ENCODE measurements at regions of chr7 and their contacts with region 1.

Region 1: GRCh38 chr7:156640257-156640948 is at the start of gene RNF32:
- DNase-seq: peak; percentile 90
- H3K4me3 Mint-ChIP-seq: peak within 1 kb of the TSS; percentile 79
- H3K27ac Mint-ChIP-seq: peak within 1 kb of the TSS; percentile 88
- H3K4me1 Mint-ChIP-seq: peaks cover 6% of the 10 kb centered on the region
- H3K27me3 Mint-ChIP-seq: no peaks in the 10 kb centered on the region
- CTCF ChIP-seq: no peak
- total RNA-seq, gene RNF32: 3.0 and 3.6 TPM in 2 replicates

Region 2: GRCh38 chr7:155815332-155816191 is 824.8 kb before region 1 on chr7:
- CTCF ChIA-PET with region 1: interaction called, 3 read pairs
- POLR2A ChIA-PET with region 1: no interaction called
- intact Hi-C with region 1: loop called (anchors 10 kb)
- DNase-seq: peak; percentile 74
- H3K4me3 Mint-ChIP-seq: no peak overlapping the region
- H3K27ac Mint-ChIP-seq: no peak overlapping the region
- H3K4me1 Mint-ChIP-seq: peaks cover 11% of the 10 kb centered on the region
- H3K27me3 Mint-ChIP-seq: peaks cover 30% of the 10 kb centered on the region
- CTCF ChIP-seq: peak; percentile 91

Region 3: GRCh38 chr7:156261595-156261994 is 378.8 kb before region 1 on chr7:
- CTCF ChIA-PET with region 1: no interaction called
- POLR2A ChIA-PET with region 1: no interaction called
- intact Hi-C with region 1: no loop called
- DNase-seq: no peak
- H3K4me3 Mint-ChIP-seq: no peak overlapping the region
- H3K27ac Mint-ChIP-seq: no peak overlapping the region
- H3K4me1 Mint-ChIP-seq: no peaks in the 10 kb centered on the region
- H3K27me3 Mint-ChIP-seq: peaks cover 38% of the 10 kb centered on the region
- CTCF ChIP-seq: no peak

Measured in MCF 10A (cell line).